ENCODE measurements at regions of chr3 and their contacts with region 1.

Region 1: GRCh38 chr3:141875374-141875892 is 1.0 kb upstream of the ATP1B3 start:
- DNase-seq: peak; percentile 58 to 81 (median 77)
- ATAC-seq: peak; percentile 76
- H3K4me3 ChIP-seq: peak overlapping the region; percentile 82
- H3K4me3 Mint-ChIP-seq: peak overlapping the region; percentile 83 to 95 (median 91)
- H3K27ac ChIP-seq: peak overlapping the region; percentile 98
- H3K27ac Mint-ChIP-seq: peak overlapping the region; percentile 76 to 96 (median 89)
- H3K4me1 ChIP-seq: peaks cover 0 to 28% of the 10 kb centered on the region in 2 donors
- H3K4me1 Mint-ChIP-seq: peaks cover 15 to 38% (median 32%) of the 10 kb centered on the region in 7 donors
- H3K27me3 ChIP-seq: no peaks in the 10 kb centered on the region
- H3K27me3 Mint-ChIP-seq: no peaks in the 10 kb centered on the region

Region 2: GRCh38 chr3:140941434-140942220 is 933.8 kb before region 1 on chr3 and contains the start of gene SLC25A36:
- CTCF ChIA-PET with region 1: no interaction called
- POLR2A ChIA-PET with region 1: no interaction called
- intact Hi-C with region 1: loop called (anchors 1 to 5 kb)
- DNase-seq: peak; percentile 83 to 96 (median 94)
- ATAC-seq: peak; percentile 99
- H3K4me3 ChIP-seq: peak within 1 kb of the TSS; percentile 69
- H3K4me3 Mint-ChIP-seq: peak within 1 kb of the TSS; percentile 90 to 100 (median 96)
- H3K27ac ChIP-seq: peak within 1 kb of the TSS; percentile 89
- H3K27ac Mint-ChIP-seq: peak within 1 kb of the TSS; percentile 94 to 100 (median 99)
- H3K4me1 ChIP-seq: peaks cover 9 to 14% of the 10 kb centered on the region in 2 donors
- H3K4me1 Mint-ChIP-seq: peaks cover 31 to 52% (median 47%) of the 10 kb centered on the region in 7 donors
- H3K27me3 ChIP-seq: no peaks in the 10 kb centered on the region
- H3K27me3 Mint-ChIP-seq: peaks cover 0 to 30% (median 0%) of the 10 kb centered on the region in 5 donors
- total RNA-seq, gene SLC25A36: 43.4 to 121 (median 66.9) TPM

Region 3: DNA sequence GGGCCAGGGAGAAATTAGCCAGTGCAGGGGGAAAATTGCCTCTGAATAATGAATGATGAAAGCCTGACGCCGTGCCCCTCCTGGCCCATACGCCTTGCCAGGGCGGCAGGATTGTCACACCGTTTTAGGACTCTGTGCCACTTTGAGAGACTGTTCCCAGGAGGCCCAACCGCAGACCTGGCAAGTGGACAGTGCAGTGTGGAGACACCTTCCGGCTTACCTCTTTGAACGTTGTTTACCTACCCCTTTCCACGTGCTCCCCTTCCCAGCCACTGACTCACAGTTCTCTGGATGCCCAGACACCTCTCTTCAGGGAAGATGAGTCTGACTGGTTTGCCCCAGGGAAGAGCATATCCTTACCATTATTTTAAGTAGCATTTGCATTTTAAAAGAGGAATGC is 727.8 kb before region 1 on chr3:
- CTCF ChIA-PET with region 1: no interaction called
- POLR2A ChIA-PET with region 1: no interaction called
- intact Hi-C with region 1: no loop called
- DNase-seq: no peak
- ATAC-seq: no peak
- H3K4me3 ChIP-seq: no peak overlapping the region
- H3K4me3 Mint-ChIP-seq: no peak overlapping the region
- H3K27ac ChIP-seq: no peak overlapping the region
- H3K27ac Mint-ChIP-seq: no peak overlapping the region
- H3K4me1 ChIP-seq: no peaks in the 10 kb centered on the region
- H3K4me1 Mint-ChIP-seq: peaks cover 0 to 1% (median 0%) of the 10 kb centered on the region in 7 donors
- H3K27me3 ChIP-seq: no peaks in the 10 kb centered on the region
- H3K27me3 Mint-ChIP-seq: peaks cover 2 to 31% (median 22%) of the 10 kb centered on the region in 5 donors

Region 4: GRCh38 chr3:141311496-141312353 is 563.7 kb before region 1 on chr3:
- CTCF ChIA-PET with region 1: no interaction called
- POLR2A ChIA-PET with region 1: no interaction called
- intact Hi-C with region 1: loop called (anchors 1 to 2 kb)
- DNase-seq: peak; percentile 88 to 98 (median 97)
- ATAC-seq: peak; percentile 97
- H3K4me3 ChIP-seq: peak overlapping the region; percentile 80
- H3K4me3 Mint-ChIP-seq: peak overlapping the region; percentile 89 to 99 (median 97)
- H3K27ac ChIP-seq: peak overlapping the region; percentile 77
- H3K27ac Mint-ChIP-seq: peak overlapping the region; percentile 91 to 99 (median 97)
- H3K4me1 ChIP-seq: peaks cover 31 to 43% of the 10 kb centered on the region in 2 donors
- H3K4me1 Mint-ChIP-seq: peaks cover 38 to 71% (median 61%) of the 10 kb centered on the region in 7 donors
- H3K27me3 ChIP-seq: no peaks in the 10 kb centered on the region
- H3K27me3 Mint-ChIP-seq: no peaks in the 10 kb centered on the region

Region 5: GRCh38 chr3:141476033-141476432 is 399.4 kb before region 1 on chr3:
- CTCF ChIA-PET with region 1: no interaction called
- POLR2A ChIA-PET with region 1: no interaction called
- intact Hi-C with region 1: no loop called
- DNase-seq: no peak
- ATAC-seq: peak; percentile 43
- H3K4me3 ChIP-seq: no peak overlapping the region
- H3K4me3 Mint-ChIP-seq: peak overlapping the region in 2 of 10 donors; percentile 13 to 16
- H3K27ac ChIP-seq: no peak overlapping the region
- H3K27ac Mint-ChIP-seq: peak overlapping the region in 4 of 9 donors; percentile 9 to 52 (median 44)
- H3K4me1 ChIP-seq: peaks cover 11% of the 10 kb centered on the region in 2 donors
- H3K4me1 Mint-ChIP-seq: peaks cover 21 to 46% (median 28%) of the 10 kb centered on the region in 7 donors
- H3K27me3 ChIP-seq: no peaks in the 10 kb centered on the region
- H3K27me3 Mint-ChIP-seq: peaks cover 0 to 21% (median 0%) of the 10 kb centered on the region in 5 donors

Region 6: DNA sequence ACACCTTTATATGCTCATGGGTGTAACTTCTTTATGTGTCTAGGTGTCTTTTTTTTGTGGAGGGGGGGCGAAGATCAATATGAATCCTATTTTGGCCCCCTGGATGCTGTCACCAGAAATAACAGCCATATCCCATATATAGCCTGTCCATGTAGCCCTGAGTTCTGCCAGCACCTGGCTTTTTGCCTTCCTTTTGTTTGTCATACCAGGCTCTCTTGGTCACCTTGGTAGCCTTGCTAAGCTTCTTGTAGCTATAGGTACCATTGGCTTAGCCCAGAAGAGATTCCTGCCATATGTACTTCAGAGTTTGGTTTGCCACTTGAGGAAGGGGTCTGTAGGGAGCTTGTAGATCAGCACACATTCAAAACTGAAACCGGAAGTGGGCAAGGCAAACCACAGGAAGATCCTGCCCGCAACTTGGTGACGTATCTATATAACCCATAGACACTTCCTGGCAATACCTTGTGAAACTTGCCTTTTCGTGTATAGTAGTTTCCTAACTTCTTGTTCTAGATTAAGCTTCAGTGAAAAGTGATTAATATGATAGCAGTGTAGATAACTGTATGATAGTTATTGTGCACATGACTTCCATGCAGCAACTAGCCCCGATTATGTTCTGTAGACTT is 376.7 kb before region 1 on chr3:
- CTCF ChIA-PET with region 1: no interaction called
- POLR2A ChIA-PET with region 1: no interaction called
- intact Hi-C with region 1: loop called in 1 of 2 experiments (anchors 2 kb)
- DNase-seq: peak; percentile 34 to 96 (median 94)
- ATAC-seq: peak; percentile 91
- H3K4me3 ChIP-seq: peak overlapping the region; percentile 52
- H3K4me3 Mint-ChIP-seq: peak overlapping the region in 9 of 10 donors; percentile 68 to 89 (median 82)
- H3K27ac ChIP-seq: peak overlapping the region; percentile 73
- H3K27ac Mint-ChIP-seq: peak overlapping the region in 5 of 9 donors; percentile 93 to 99 (median 96)
- H3K4me1 ChIP-seq: peaks cover 66 to 69% of the 10 kb centered on the region in 2 donors
- H3K4me1 Mint-ChIP-seq: peaks cover 32 to 76% (median 50%) of the 10 kb centered on the region in 7 donors
- H3K27me3 ChIP-seq: no peaks in the 10 kb centered on the region
- H3K27me3 Mint-ChIP-seq: no peaks in the 10 kb centered on the region

Region 7: DNA sequence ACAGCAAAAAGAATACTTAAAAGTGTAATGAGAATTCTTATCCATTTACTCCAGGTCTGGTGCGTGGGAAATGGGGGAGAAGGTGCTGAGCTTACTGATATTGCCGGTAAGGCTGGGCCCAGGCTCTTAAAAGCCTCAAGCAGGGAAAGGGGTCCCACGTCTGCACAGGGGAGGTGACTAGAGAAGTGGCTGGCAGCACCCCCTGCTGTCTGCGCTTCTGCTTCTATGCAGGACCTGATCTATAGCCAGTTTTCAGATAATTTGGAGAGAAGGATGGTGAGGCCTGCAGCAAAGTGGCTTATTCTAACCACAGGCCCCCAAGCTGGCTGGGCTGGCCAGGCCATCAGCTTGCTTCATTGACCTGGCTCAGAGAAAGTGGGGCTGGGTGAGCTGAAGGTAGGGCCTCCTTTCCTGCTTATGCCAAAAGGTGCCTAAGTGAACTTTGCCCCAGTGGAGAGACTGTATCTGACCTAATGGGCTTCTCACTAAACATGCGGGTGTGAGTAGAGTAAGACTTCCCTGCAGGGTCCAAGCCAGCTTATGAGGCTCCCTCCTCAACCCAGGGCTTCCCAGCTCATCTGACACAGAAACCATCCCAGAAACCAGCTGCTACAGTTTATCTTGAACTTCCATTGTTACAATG is 29.9 kb before region 1 on chr3:
- CTCF ChIA-PET with region 1: interaction called, 3 read pairs
- POLR2A ChIA-PET with region 1: no interaction called
- intact Hi-C with region 1: loop called in 1 of 2 experiments (anchors 1 kb)
- DNase-seq: peak in 7 of 9 donors; percentile 10 to 46 (median 25)
- ATAC-seq: peak; percentile 55
- H3K4me3 ChIP-seq: no peak overlapping the region
- H3K4me3 Mint-ChIP-seq: no peak overlapping the region
- H3K27ac ChIP-seq: no peak overlapping the region
- H3K27ac Mint-ChIP-seq: peak overlapping the region in 2 of 9 donors; percentile 36 to 42
- H3K4me1 ChIP-seq: no peaks in the 10 kb centered on the region
- H3K4me1 Mint-ChIP-seq: peaks cover 4 to 18% (median 9%) of the 10 kb centered on the region in 7 donors
- H3K27me3 ChIP-seq: no peaks in the 10 kb centered on the region
- H3K27me3 Mint-ChIP-seq: peaks cover 0 to 6% (median 5%) of the 10 kb centered on the region in 5 donors

Region 8: GRCh38 chr3:142148792-142149672 is 273.6 kb after region 1 on chr3 and contains the start of gene TFDP2:
- CTCF ChIA-PET with region 1: no interaction called
- POLR2A ChIA-PET with region 1: no interaction called
- intact Hi-C with region 1: loop called (anchors 5 kb)
- DNase-seq: peak; percentile 77 to 88 (median 86)
- ATAC-seq: peak; percentile 99
- H3K4me3 ChIP-seq: peak within 1 kb of the TSS; percentile 81
- H3K4me3 Mint-ChIP-seq: peak within 1 kb of the TSS; percentile 85 to 96 (median 92)
- H3K27ac ChIP-seq: peak within 1 kb of the TSS; percentile 78
- H3K27ac Mint-ChIP-seq: peak within 1 kb of the TSS; percentile 57 to 95 (median 87)
- H3K4me1 ChIP-seq: peaks cover 0 to 13% of the 10 kb centered on the region in 2 donors
- H3K4me1 Mint-ChIP-seq: peaks cover 24 to 41% (median 32%) of the 10 kb centered on the region in 7 donors
- H3K27me3 ChIP-seq: no peaks in the 10 kb centered on the region
- H3K27me3 Mint-ChIP-seq: peaks cover 0 to 16% (median 0%) of the 10 kb centered on the region in 5 donors
- total RNA-seq, gene TFDP2: 23.7 to 44.7 (median 41.0) TPM

Region 9: GRCh38 chr3:142723968-142724681 is 848.7 kb after region 1 on chr3 and contains the start of gene TRPC1:
- CTCF ChIA-PET with region 1: no interaction called
- POLR2A ChIA-PET with region 1: no interaction called
- intact Hi-C with region 1: loop called in 1 of 2 experiments (anchors 2 kb)
- DNase-seq: peak in 8 of 9 donors; percentile 58 to 83 (median 78)
- ATAC-seq: peak; percentile 97
- H3K4me3 ChIP-seq: peak within 1 kb of the TSS; percentile 76
- H3K4me3 Mint-ChIP-seq: peak within 1 kb of the TSS; percentile 80 to 92 (median 88)
- H3K27ac ChIP-seq: peak within 1 kb of the TSS; percentile 76
- H3K27ac Mint-ChIP-seq: peak within 1 kb of the TSS; percentile 31 to 94 (median 88)
- H3K4me1 ChIP-seq: peaks cover 0 to 4% of the 10 kb centered on the region in 2 donors
- H3K4me1 Mint-ChIP-seq: peaks cover 5 to 20% (median 11%) of the 10 kb centered on the region in 7 donors
- H3K27me3 ChIP-seq: peaks cover 0 to 2% of the 10 kb centered on the region in 2 donors
- H3K27me3 Mint-ChIP-seq: peaks cover 20 to 67% (median 22%) of the 10 kb centered on the region in 5 donors
- total RNA-seq, gene TRPC1: 1.5 to 7.6 (median 5.3) TPM

Measured in naive thymus-derived CD4-positive, alpha-beta T cell (primary cell).